Posterior cingulate gyrus (tissue), 11 donors: ENCODE measurements at regions of chr6 and their contacts with region 1.

Region 1: GRCh38 chr6:162442687-162443086 is 284.9 kb downstream of the PRKN start:
- DNase-seq: peak in 6 of 10 donors; percentile 36 to 88 (median 53)

Region 2: DNA sequence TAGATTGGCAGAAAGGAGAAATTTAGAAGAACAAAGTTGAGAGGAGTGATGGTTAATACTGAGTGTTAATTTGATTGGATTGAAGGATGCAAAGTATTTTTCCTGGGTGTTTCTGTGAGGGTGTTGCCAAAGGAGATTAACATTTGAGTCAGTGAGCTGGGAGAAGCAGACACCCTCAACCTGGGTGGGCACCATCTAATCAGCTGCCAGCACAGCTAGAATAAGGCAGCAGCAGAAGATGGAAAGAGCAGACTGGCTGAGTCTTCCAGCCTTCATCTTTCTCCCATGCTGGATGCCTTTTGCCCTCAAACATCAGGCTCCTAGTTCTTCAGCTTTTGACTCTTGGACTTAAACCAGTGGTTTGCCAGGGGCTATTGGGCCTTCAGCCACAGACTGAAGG is 731.2 kb before region 1 on chr6:
- intact Hi-C with region 1: no loop called
- DNase-seq: no peak

Region 3: DNA sequence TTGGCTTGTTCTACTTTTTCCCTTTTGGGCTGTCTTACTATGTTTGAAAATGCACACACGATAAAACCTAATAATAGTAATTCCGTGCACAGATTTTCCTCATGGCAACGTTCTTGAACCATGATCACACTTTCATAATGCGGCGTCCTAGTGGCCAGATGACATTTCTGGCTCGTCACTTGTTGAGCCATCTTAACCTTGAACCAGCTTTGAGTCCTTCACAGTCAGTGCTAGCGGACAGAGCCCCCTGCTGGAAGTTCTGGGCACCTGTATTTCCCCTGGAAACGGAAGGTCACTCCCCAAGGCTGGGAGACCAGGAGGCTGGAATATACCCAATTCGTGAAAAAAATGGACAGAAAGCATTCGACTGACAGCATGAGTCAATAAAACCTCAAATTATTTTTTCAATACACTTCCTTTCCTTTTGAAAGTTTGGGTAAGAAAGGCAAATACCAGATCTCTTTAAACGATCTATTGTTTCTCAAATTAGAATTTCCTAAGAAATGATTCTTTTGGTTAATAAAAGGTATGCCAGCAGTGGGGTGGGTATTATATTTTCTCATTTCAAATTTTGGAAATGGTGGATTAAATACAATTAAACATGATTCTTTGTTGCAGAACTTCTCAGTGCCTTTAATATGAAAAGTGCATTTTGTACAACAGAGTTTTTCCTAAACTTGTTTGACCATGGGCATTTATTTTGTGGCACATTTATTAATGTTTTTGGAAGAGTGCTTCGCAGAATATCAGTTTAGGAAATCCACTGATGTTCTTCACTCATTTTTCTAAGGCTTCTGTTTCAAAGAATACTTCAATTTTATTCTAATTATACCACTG is 1514.1 kb after region 1 on chr6:
- intact Hi-C with region 1: loop called (anchors 5 kb)
- DNase-seq: peak in 9 of 10 donors; percentile 45 to 95 (median 76)